ENCODE measurements at regions of chr6 and their contacts with region 1.

Region 1: GRCh38 chr6:105402939-105403935 is at the start of gene PREP:
- DNase-seq: peak; percentile 90
- H3K4me3 ChIP-seq: peak within 1 kb of the TSS; percentile 86 to 95 (median 90)
- H3K27ac ChIP-seq: peak within 1 kb of the TSS; percentile 78 to 89 (median 86)
- H3K4me1 ChIP-seq: peaks cover 0 to 30% (median 25%) of the 10 kb centered on the region in 4 donors
- H3K27me3 ChIP-seq: no peaks in the 10 kb centered on the region
- CTCF ChIP-seq: peak; percentile 76 to 94 (median 86)
- EP300 ChIP-seq: no peak
- POLR2A ChIP-seq: no peak
- total RNA-seq, gene PREP: 14.1 to 23.5 (median 21.1) TPM

Region 2: GRCh38 chr6:105087571-105088211 is 315.5 kb before region 1 on chr6:
- intact Hi-C with region 1: loop called (anchors 1 kb)
- DNase-seq: no peak
- H3K4me3 ChIP-seq: no peak overlapping the region
- H3K27ac ChIP-seq: no peak overlapping the region
- H3K4me1 ChIP-seq: peaks cover 0 to 16% (median 9%) of the 10 kb centered on the region in 4 donors
- H3K27me3 ChIP-seq: no peaks in the 10 kb centered on the region
- CTCF ChIP-seq: peak; percentile 60 to 82 (median 78)
- EP300 ChIP-seq: no peak
- POLR2A ChIP-seq: no peak

Region 3: DNA sequence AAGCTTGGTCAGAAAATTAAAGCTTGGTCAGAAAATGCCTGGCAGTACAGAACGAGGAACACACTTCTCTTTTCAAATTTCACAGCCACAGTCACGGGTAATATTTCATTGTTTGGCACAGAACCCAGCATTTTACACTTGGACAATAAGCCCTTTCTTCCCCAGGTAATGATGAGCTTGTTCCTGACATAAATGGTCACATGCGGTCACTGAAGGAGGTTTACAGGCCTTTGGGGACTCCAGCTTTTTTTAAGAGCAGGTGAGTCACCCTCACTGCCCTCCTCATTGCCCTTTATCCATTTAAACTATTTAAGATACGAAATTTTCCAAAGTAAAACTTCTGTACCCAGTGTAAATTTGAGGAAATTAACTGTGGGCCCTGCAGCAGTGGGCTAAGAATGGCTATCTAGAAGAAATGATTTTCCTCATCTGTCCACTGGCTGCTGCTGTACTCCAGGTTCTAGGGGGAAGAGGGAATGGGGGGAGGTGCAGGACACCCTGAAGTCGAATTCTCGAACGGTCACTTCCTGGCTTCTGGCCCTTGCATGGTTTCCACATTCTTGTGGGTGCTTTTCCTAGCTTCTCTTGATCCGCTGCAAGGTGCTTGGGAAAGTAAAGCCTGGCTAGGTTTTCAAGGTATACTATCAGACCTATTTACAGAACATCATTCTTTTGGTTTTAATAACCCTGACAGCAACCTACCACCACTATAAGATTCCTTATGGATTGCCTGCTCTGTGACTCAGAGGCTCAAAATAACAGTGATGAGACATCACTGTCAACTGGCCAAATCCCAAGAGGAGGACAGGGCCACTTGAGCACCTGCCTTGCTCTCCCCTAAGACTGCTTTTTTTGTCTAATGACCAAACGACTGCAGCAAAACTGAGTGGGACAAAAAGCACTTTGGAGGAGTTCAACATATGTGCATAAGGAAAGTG is 76.1 kb before region 1 on chr6:
- intact Hi-C with region 1: loop called (anchors 2 kb)
- DNase-seq: no peak
- H3K4me3 ChIP-seq: no peak overlapping the region
- H3K27ac ChIP-seq: peak overlapping the region in 2 of 4 donors; percentile 13 to 25
- H3K4me1 ChIP-seq: peaks cover 0 to 47% (median 18%) of the 10 kb centered on the region in 4 donors
- H3K27me3 ChIP-seq: no peaks in the 10 kb centered on the region
- CTCF ChIP-seq: no peak
- EP300 ChIP-seq: no peak
- POLR2A ChIP-seq: no peak